Activated B cell treated with CpG ODN at 0.5 μM for 24 hours (primary cell): ENCODE measurements at regions of chr20 and their contacts with region 1.

Region 1: GRCh38 chr20:1392823-1393506 is at the start of gene FKBP1A:
- DNase-seq: peak; percentile 90
- ATAC-seq: peak; percentile 85
- H3K4me3 Mint-ChIP-seq: peak within 1 kb of the TSS; percentile 98
- H3K27ac Mint-ChIP-seq: peak within 1 kb of the TSS; percentile 99
- H3K4me1 Mint-ChIP-seq: peaks cover 83% of the 10 kb centered on the region
- H3K27me3 Mint-ChIP-seq: no peaks in the 10 kb centered on the region
- CTCF ChIP-seq: no peak
- total RNA-seq, gene FKBP1A: 128 and 134 TPM in 2 replicates

Region 2: DNA sequence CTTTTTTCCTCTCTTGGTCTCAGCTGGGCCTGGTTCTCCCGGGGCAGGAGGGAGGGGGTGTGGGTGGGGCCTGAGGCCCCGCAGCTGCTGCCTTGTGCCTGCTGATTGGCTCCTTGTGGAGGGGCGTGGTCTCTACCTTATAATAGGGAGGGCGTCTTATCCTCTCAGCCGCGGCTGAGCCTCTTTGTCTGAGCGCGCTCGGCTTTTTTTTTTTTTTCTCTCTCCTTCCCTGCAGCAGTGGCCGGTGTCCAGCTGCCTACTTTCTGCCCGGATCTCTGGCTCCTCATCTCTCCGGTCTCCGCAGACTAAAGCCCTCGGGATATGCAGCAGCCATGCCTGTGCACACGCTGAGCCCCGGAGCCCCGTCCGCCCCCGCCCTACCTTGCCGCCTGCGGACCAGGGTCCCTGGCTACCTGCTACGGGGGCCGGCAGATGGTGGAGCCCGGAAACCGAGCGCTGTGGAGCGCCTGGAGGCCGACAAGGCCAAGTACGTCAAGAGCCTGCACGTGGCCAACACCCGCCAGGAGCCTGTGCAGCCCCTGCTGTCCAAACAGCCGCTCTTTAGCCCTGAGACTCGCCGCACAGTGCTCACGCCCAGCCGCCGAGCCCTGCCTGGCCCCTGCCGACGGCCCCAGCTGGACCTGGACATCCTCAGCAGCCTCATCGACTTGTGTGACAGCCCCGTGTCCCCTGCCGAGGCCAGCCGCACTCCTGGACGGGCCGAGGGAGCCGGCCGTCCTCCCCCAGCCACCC is 548.3 kb before region 1 on chr20:
- CTCF ChIA-PET with region 1: no interaction called
- POLR2A ChIA-PET with region 1: no interaction called
- intact Hi-C with region 1: loop called (anchors 10 kb)
- DNase-seq: peak; percentile 64
- ATAC-seq: peak; percentile 98
- H3K4me3 Mint-ChIP-seq: peak overlapping the region; percentile 87
- H3K27ac Mint-ChIP-seq: peak overlapping the region; percentile 41
- H3K4me1 Mint-ChIP-seq: peaks cover 55% of the 10 kb centered on the region
- H3K27me3 Mint-ChIP-seq: no peaks in the 10 kb centered on the region
- CTCF ChIP-seq: no peak

Region 3: DNA sequence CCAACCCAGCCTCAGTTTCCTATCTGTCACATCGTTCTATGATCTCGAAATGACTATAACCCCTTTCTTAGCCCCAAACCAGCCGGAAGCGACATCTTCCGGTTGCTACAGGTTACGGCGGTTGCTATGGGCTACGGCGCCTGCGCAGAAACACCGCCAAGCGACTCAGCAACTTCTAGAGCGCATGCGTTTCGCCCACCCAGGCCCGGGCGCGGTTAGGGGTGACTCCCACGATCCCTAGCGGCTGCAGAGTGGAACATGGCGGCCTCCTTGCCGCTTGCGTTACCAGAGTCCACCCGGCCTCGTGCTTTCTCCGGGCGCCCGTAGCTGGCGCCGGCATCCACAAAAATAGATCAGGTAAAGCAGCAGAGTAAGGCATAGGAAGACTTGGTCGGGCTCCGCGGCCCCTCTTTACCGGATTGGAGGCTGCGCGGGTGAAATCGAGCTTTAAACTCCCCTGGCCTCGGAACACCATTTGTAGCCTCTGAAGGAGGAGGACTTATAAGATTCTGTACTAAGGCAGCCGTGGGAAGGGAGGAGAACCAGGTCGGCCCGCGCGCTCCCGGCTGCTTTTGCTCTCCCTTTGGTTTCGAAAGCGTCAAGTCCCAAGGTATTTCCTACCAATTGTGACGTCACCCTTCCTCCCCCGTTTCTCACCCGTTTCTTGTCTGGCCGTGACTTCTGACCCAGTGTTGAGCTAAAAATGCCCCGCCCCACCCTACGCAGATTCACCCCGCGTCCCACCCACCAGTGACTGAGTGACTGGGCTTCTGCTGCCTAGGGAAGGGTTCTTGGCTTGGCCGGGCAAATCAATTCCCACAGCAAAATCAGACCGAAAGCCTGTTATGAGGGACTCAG is 67.6 kb before region 1 on chr20:
- CTCF ChIA-PET with region 1: no interaction called
- POLR2A ChIA-PET with region 1: interaction called, 19 read pairs
- intact Hi-C with region 1: loop called (anchors 1 kb)
- DNase-seq: peak; percentile 97
- ATAC-seq: peak; percentile 88
- H3K4me3 Mint-ChIP-seq: no peak overlapping the region
- H3K27ac Mint-ChIP-seq: no peak overlapping the region
- H3K4me1 Mint-ChIP-seq: peaks cover 38% of the 10 kb centered on the region
- H3K27me3 Mint-ChIP-seq: no peaks in the 10 kb centered on the region
- CTCF ChIP-seq: no peak

Region 4: DNA sequence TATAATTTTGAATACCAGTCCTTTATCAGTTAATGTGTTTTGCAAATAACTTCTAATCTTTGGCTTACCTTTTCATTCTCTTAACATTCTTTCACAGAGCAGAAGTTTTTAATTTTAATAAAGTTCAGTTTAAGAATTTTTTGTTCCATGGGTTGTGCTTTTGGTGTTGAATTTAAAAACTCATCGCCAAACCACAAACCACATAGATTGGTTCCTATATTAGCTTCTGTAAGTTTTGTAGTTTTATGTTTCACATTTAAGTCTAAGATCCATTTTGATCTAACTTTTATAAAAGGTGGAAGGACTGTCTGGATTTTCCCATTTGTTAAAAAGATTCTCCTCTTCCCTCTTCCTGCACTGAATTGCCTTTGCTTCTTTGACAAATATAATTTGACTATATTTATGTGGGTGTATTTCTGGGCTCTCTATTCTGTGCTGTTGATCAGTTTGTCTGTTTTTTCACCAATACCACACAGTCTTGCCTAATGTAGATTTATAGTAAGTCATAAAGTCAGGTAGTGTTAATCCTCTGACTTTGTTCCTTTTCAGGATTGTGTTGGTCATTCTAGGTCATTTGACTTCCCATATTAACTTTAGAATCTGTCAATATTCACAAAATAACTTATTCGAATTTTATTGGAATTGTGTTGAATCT is 46.5 kb before region 1 on chr20:
- CTCF ChIA-PET with region 1: no interaction called
- POLR2A ChIA-PET with region 1: no interaction called
- intact Hi-C with region 1: no loop called
- DNase-seq: no peak
- ATAC-seq: no peak
- H3K4me3 Mint-ChIP-seq: no peak overlapping the region
- H3K27ac Mint-ChIP-seq: no peak overlapping the region
- H3K4me1 Mint-ChIP-seq: peaks cover 3% of the 10 kb centered on the region
- H3K27me3 Mint-ChIP-seq: no peaks in the 10 kb centered on the region
- CTCF ChIP-seq: no peak

Region 5: DNA sequence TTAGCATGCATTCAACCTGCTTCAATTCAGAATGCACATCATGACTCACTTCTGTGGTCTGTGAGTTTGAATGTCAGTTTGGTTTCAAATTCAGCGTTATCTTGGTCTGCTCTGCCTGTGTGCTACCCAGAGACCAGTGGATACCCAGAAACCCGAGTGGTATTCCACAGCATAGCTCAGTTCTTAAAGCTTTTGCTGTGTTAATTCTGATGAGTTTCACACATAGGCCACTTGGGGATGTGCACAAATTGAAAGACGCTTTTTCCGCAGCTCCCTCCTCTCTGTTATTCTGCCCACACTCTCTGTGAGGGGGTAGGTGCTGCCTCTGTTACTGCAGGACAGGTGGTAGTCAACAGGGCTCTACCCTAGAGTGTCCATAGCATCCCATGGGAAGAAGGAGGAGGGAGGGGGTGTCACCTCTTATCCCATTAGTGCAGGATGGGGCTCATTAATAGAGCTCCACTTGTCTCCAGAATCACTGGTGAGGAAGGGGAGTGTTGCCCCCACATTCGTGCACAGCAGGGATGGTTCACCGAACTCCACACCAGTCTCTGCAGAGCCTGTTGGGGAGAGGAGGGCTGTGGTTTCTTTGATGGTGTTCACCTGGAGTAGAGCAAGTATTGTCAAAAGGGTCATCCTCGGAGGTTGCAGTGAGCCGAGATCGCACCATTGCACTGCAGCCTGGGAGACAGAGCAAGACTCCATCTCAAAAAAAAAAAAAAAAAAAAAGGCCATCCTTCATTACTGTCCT is 34.9 kb before region 1 on chr20:
- CTCF ChIA-PET with region 1: no interaction called
- POLR2A ChIA-PET with region 1: no interaction called
- intact Hi-C with region 1: no loop called
- DNase-seq: no peak
- ATAC-seq: no peak
- H3K4me3 Mint-ChIP-seq: no peak overlapping the region
- H3K27ac Mint-ChIP-seq: no peak overlapping the region
- H3K4me1 Mint-ChIP-seq: peaks cover 7% of the 10 kb centered on the region
- H3K27me3 Mint-ChIP-seq: no peaks in the 10 kb centered on the region
- CTCF ChIP-seq: no peak

Region 6: DNA sequence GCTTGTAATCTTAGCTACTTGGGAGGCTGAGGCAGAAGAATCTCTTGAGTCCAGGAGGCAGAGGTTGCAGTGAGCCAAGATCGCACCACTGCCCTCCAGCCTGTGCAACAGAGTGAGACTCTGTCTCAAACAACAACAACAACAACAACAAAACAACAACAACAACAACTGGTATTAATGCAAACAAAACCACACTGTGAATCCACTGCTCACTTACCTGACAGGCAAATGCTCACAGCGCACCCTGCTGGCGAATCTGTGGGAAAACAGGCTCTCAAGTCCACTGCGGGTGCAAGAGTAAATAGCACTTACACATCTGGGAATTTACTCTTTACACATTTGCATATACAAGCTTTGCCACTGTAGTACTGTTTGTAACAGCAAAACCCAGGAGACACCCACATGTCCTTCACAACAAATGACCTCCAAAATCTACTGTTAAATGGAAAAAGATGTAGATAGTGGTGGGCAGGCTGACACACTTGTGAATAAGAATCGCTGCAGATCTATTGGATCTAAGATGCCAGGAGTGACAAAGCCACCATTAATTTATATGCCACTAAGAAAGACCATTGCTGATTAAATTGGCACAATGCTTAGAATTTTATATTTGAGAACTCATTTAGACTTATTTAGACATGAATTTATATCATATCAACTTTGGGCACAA is 44.4 kb after region 1 on chr20:
- CTCF ChIA-PET with region 1: interaction called, 5 read pairs
- POLR2A ChIA-PET with region 1: interaction called, 5 read pairs
- intact Hi-C with region 1: loop called (anchors 1 kb)
- DNase-seq: peak; percentile 57
- ATAC-seq: peak; percentile 59
- H3K4me3 Mint-ChIP-seq: no peak overlapping the region
- H3K27ac Mint-ChIP-seq: no peak overlapping the region
- H3K4me1 Mint-ChIP-seq: peaks cover 34% of the 10 kb centered on the region
- H3K27me3 Mint-ChIP-seq: no peaks in the 10 kb centered on the region
- CTCF ChIP-seq: peak; percentile 81

Region 7: GRCh38 chr20:2984956-2985661 is 1592.1 kb after region 1 on chr20:
- CTCF ChIA-PET with region 1: no interaction called
- POLR2A ChIA-PET with region 1: no interaction called
- intact Hi-C with region 1: loop called (anchors 5 kb)
- DNase-seq: no peak
- ATAC-seq: no peak
- H3K4me3 Mint-ChIP-seq: no peak overlapping the region
- H3K27ac Mint-ChIP-seq: no peak overlapping the region
- H3K4me1 Mint-ChIP-seq: peaks cover 2% of the 10 kb centered on the region
- H3K27me3 Mint-ChIP-seq: no peaks in the 10 kb centered on the region
- CTCF ChIP-seq: no peak